WTC11 (cell line): ENCODE measurements at regions of chr17 and their contacts with region 1.

Region 1: GRCh38 chr17:7744416-7744815 is 26.9 kb downstream of the DNAH2 start:
- DNase-seq: no peak
- ATAC-seq: no peak
- H3K4me3 Mint-ChIP-seq: no peak overlapping the region
- H3K27ac Mint-ChIP-seq: no peak overlapping the region
- H3K4me1 Mint-ChIP-seq: no peaks in the 10 kb centered on the region
- H3K27me3 Mint-ChIP-seq: peaks cover 12% of the 10 kb centered on the region
- CTCF ChIP-seq: no peak

Region 2: DNA sequence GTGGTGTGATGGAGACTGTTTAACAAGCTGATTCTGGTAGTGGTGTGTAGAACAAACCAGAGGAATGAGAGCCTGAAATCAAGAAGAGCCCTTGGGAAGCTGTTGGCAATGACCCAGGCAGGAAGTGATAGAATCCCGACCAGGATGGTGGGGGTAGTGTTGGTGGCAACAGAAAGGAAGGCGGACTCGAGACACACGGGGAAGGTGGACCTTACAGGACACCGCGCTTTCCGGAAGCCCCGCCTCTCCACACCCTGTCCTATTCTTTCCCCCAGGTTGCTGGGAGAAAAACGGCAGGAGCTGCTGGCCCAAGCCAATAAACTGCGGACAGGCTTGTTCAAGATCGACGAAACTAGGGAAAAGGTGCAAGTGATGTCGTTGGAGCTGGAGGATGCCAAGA is 59.6 kb after region 1 on chr17:
- CTCF ChIA-PET with region 1: interaction called, 10 read pairs
- POLR2A ChIA-PET with region 1: no interaction called
- DNase-seq: no peak
- ATAC-seq: peak; percentile 83
- H3K4me3 Mint-ChIP-seq: no peak overlapping the region
- H3K27ac Mint-ChIP-seq: peak overlapping the region; percentile 42; the same call in 1 of the 2 replicates
- H3K4me1 Mint-ChIP-seq: peaks cover 6% of the 10 kb centered on the region
- H3K27me3 Mint-ChIP-seq: peaks cover 3% of the 10 kb centered on the region
- CTCF ChIP-seq: no peak

Region 3: GRCh38 chr17:7816926-7817642 is 72.7 kb after region 1 on chr17:
- CTCF ChIA-PET with region 1: interaction called, 10 read pairs
- POLR2A ChIA-PET with region 1: no interaction called
- DNase-seq: no peak
- ATAC-seq: no peak
- H3K4me3 Mint-ChIP-seq: no peak overlapping the region
- H3K27ac Mint-ChIP-seq: no peak overlapping the region
- H3K4me1 Mint-ChIP-seq: no peaks in the 10 kb centered on the region
- H3K27me3 Mint-ChIP-seq: peaks cover 3% of the 10 kb centered on the region
- CTCF ChIP-seq: no peak

Region 4: GRCh38 chr17:7825206-7825990 is 81.0 kb after region 1 on chr17:
- CTCF ChIA-PET with region 1: interaction called, 10 read pairs
- POLR2A ChIA-PET with region 1: no interaction called
- DNase-seq: no peak
- ATAC-seq: no peak
- H3K4me3 Mint-ChIP-seq: no peak overlapping the region
- H3K27ac Mint-ChIP-seq: no peak overlapping the region
- H3K4me1 Mint-ChIP-seq: peaks cover 12% of the 10 kb centered on the region
- H3K27me3 Mint-ChIP-seq: peaks cover 60% of the 10 kb centered on the region
- CTCF ChIP-seq: no peak

Region 5: GRCh38 chr17:7834962-7835813 is 90.8 kb after region 1 on chr17:
- CTCF ChIA-PET with region 1: interaction called, 19 read pairs
- POLR2A ChIA-PET with region 1: no interaction called
- DNase-seq: peak; percentile 98
- ATAC-seq: peak; percentile 60
- H3K4me3 Mint-ChIP-seq: peak overlapping the region; percentile 93
- H3K27ac Mint-ChIP-seq: peak overlapping the region; percentile 86
- H3K4me1 Mint-ChIP-seq: peaks cover 34% of the 10 kb centered on the region
- H3K27me3 Mint-ChIP-seq: peaks cover 54% of the 10 kb centered on the region
- CTCF ChIP-seq: peak; percentile 45